Mammary epithelial cell (primary cell): ENCODE measurements at regions of chr4 and their contacts with region 1.

Region 1: DNA sequence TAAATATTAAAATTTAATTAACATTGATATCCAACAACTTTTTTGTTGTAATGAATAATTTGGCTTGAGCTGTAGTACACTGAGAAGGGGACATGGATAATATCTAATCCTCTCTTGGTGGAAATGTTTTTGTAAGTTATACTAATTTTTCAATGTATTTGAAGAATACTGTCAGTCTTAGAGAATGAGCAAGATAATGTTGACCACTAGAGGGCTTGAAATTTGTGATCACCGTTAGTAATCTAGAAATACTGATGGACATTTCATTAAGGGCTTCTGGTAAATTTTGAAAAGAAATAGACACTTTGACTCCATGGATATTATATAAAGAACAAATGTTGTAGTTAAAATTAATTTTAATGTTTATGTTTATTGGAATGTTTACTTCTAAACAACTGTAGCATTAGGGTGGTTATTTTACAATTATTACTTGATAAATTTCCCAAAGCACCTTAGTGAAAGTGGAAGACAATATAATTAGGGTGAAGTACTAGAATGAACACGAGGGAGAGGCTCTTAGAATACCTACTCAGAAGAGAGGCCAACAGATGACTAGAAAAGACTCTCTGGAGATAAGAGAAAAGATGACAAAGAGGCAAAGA is 20.0 kb upstream of the CAMK2D start:
- DNase-seq: no peak
- H3K4me3 ChIP-seq: no peak overlapping the region
- H3K27ac ChIP-seq: no peak overlapping the region
- H3K4me1 ChIP-seq: peaks cover 15% of the 10 kb centered on the region
- H3K27me3 ChIP-seq: no peaks in the 10 kb centered on the region
- CTCF ChIP-seq: peak; percentile 66 to 83

Region 2: GRCh38 chr4:114057746-114058145 is 276.2 kb after region 1 on chr4:
- CTCF ChIA-PET with region 1: no interaction called
- dilution Hi-C with region 1: no loop called
- in situ Hi-C with region 1: no loop called
- intact Hi-C with region 1: loop called (anchors 5 kb)
- DNase-seq: peak; percentile 62
- H3K4me3 ChIP-seq: peak overlapping the region in 1 of 3 experiments; percentile 5
- H3K27ac ChIP-seq: peak overlapping the region; percentile 59
- H3K4me1 ChIP-seq: peaks cover 11% of the 10 kb centered on the region
- H3K27me3 ChIP-seq: no peaks in the 10 kb centered on the region
- CTCF ChIP-seq: no peak

Region 3: GRCh38 chr4:114077610-114078009 is 296.1 kb after region 1 on chr4:
- CTCF ChIA-PET with region 1: no interaction called
- dilution Hi-C with region 1: no loop called
- in situ Hi-C with region 1: no loop called
- intact Hi-C with region 1: loop called (anchors 5 kb)
- DNase-seq: peak; percentile 73
- H3K4me3 ChIP-seq: no peak overlapping the region
- H3K27ac ChIP-seq: peak overlapping the region; percentile 19
- H3K4me1 ChIP-seq: peaks cover 13% of the 10 kb centered on the region
- H3K27me3 ChIP-seq: no peaks in the 10 kb centered on the region
- CTCF ChIP-seq: no peak